Caco-2 (cell line): ENCODE measurements at regions of chr12 and their contacts with region 1.

Region 1: DNA sequence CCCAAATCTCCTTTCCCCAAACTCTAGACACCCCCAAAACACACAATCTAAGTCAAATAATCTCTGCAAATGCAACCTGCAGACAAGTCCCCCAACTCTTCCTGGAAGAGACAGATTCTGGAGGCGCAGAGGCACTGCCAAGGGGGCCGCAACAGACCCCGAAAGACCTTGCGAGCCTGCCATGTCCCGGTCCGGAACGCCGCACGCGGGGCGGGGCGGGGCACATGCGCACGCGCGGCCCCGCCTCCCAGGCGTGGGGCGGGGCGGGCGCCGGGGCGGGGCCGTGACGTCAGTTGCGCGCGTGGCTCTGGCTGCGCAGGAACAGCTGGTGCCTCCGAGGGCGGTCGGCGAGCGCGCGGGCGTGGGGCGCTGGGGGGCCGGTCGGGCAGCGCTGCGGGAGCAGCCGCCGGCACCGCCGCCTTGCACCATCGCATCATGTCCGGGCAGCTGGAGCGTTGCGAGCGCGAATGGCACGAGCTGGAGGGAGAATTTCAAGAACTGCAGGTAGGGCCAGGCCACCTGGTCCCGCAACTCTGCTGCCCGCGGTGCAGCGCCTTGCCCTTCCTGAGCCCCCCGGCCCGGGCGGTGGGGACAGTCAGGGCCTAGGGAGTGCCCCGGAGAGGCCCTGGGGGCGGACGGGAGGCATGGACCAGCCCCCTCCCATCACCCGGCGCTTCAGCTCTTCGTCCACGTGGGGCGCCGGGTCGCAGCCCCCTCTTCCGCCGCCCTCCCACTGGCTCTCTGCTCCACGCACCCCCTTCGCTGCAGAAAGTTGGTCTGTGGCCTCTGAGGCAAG is at the start of gene TMEM120B:
- DNase-seq: peak; percentile 78 to 89
- H3K4me3 ChIP-seq: peak within 1 kb of the TSS; percentile 98
- H3K4me3 Mint-ChIP-seq: peak within 1 kb of the TSS; percentile 81
- H3K27ac Mint-ChIP-seq: peak within 1 kb of the TSS; percentile 94
- H3K4me1 ChIP-seq: peaks cover 35% of the 10 kb centered on the region
- H3K4me1 Mint-ChIP-seq: peaks cover 17% of the 10 kb centered on the region
- H3K27me3 ChIP-seq: no peaks in the 10 kb centered on the region
- H3K27me3 Mint-ChIP-seq: no peaks in the 10 kb centered on the region
- CTCF ChIP-seq: peak; percentile 13 to 31
- total RNA-seq, gene TMEM120B: 15.5 and 15.9 TPM in 2 replicates

Region 2: GRCh38 chr12:121688966-121689365 is 23.7 kb before region 1 on chr12:
- CTCF ChIA-PET with region 1: interaction called, 7 read pairs
- POLR2A ChIA-PET with region 1: interaction called, 5 read pairs
- intact Hi-C with region 1: loop called (anchors 1 kb)
- DNase-seq: no peak
- H3K4me3 ChIP-seq: no peak overlapping the region
- H3K4me3 Mint-ChIP-seq: no peak overlapping the region
- H3K27ac Mint-ChIP-seq: no peak overlapping the region
- H3K4me1 ChIP-seq: no peaks in the 10 kb centered on the region
- H3K4me1 Mint-ChIP-seq: no peaks in the 10 kb centered on the region
- H3K27me3 ChIP-seq: no peaks in the 10 kb centered on the region
- H3K27me3 Mint-ChIP-seq: no peaks in the 10 kb centered on the region
- CTCF ChIP-seq: no peak

Region 3: GRCh38 chr12:121748571-121749253 is 36.1 kb after region 1 on chr12:
- CTCF ChIA-PET with region 1: interaction called, 4 read pairs
- POLR2A ChIA-PET with region 1: interaction called, 5 read pairs
- intact Hi-C with region 1: loop called (anchors 2 kb)
- DNase-seq: peak; percentile 83 to 92
- H3K4me3 ChIP-seq: no peak overlapping the region
- H3K4me3 Mint-ChIP-seq: peak overlapping the region; percentile 65
- H3K27ac Mint-ChIP-seq: peak overlapping the region; percentile 95
- H3K4me1 ChIP-seq: peaks cover 15% of the 10 kb centered on the region
- H3K4me1 Mint-ChIP-seq: peaks cover 10% of the 10 kb centered on the region
- H3K27me3 ChIP-seq: no peaks in the 10 kb centered on the region
- H3K27me3 Mint-ChIP-seq: no peaks in the 10 kb centered on the region
- CTCF ChIP-seq: no peak

Region 4: DNA sequence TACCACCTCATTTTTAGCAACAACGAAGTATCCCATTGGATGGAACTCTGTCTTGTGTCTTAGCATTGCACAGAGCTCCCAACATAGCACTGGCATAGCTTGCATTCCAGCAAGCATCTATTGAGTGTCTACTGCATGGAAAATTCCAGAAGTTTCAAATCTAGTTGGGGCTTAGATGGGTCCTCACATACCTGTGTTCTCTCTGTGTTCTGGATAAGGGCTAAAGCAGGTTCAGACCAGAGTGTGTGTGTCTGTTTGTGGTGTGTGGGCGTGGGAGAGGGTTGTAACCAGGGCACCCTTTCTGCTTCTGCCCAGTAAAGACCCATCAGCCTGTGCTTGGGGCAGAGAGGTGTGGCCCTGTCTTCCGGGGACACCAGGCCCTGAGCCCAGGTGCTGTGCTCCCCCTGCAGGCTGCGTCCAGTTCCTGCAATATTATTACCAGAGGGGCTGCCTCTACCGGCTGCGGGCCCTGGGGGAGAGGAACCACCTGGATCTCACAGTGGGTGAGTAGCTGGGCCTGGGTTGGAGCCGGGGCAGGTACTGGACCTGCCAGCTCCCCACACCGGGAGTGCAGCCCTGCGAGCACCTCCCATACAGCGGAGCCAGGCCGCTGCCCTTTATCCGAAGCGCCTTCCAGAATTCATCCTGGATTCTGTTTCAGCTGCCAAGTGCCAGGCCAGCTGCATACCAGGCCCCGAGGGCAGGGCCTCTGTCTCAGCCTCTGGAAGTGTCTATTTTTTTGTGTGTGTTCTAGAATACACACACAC is 60.5 kb after region 1 on chr12:
- CTCF ChIA-PET with region 1: interaction called, 11 read pairs
- POLR2A ChIA-PET with region 1: interaction called, 3 read pairs
- intact Hi-C with region 1: no loop called
- DNase-seq: peak; percentile 81 to 86
- H3K4me3 ChIP-seq: no peak overlapping the region
- H3K4me3 Mint-ChIP-seq: no peak overlapping the region
- H3K27ac Mint-ChIP-seq: peak overlapping the region; percentile 25
- H3K4me1 ChIP-seq: peaks cover 20% of the 10 kb centered on the region
- H3K4me1 Mint-ChIP-seq: peaks cover 11% of the 10 kb centered on the region
- H3K27me3 ChIP-seq: no peaks in the 10 kb centered on the region
- H3K27me3 Mint-ChIP-seq: no peaks in the 10 kb centered on the region
- CTCF ChIP-seq: peak; percentile 89 to 90

Region 5: GRCh38 chr12:121888478-121889266 is 176.0 kb after region 1 on chr12 and contains the start of gene PSMD9:
- CTCF ChIA-PET with region 1: no interaction called
- POLR2A ChIA-PET with region 1: no interaction called
- intact Hi-C with region 1: loop called (anchors 5 kb)
- DNase-seq: peak; percentile 98 to 99
- H3K4me3 ChIP-seq: peak within 1 kb of the TSS; percentile 84
- H3K4me3 Mint-ChIP-seq: peak within 1 kb of the TSS; percentile 84
- H3K27ac Mint-ChIP-seq: peak within 1 kb of the TSS; percentile 86
- H3K4me1 ChIP-seq: peaks cover 10% of the 10 kb centered on the region
- H3K4me1 Mint-ChIP-seq: peaks cover 15% of the 10 kb centered on the region
- H3K27me3 ChIP-seq: no peaks in the 10 kb centered on the region
- H3K27me3 Mint-ChIP-seq: no peaks in the 10 kb centered on the region
- CTCF ChIP-seq: peak; percentile 50 to 78
- total RNA-seq, gene PSMD9: 53.0 and 63.3 TPM in 2 replicates

Region 6: DNA sequence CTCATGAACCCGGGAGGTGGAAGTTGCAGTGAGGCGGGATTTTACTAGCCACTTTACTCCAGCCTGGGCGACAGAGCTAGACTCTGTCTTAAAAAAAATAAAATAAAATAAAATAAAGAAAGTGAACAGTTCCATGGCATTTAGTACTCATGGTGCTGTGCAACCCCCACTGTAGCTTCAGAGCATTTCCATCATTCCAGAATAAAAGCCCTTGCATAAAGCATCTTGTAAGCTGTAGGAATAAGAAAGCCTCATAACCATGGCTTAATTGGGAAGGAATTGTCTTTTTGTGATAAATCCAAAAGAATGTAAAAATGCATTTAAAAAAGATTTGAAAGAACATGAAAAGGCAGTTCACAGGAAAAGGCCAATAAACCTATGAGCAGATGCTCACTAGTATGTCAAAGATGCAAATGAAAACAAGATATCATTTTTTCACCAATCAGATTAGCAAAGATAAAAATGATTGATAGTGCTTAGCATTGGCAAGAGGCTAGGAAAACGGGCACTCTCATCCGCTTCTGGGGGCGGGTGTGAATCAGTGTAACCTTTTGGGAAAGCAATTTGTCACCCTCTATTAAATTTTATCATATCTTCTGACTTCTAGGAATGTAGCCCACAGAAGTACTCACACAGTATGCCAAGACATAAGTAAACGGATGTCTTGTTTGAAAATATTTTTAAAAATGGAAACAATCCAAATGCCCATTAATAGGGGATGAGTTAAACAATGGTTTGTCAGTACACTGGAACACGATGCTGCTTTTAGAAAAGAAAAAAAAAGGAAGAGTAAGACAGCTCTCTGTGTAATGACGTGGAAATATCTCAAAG is 252.4 kb after region 1 on chr12:
- CTCF ChIA-PET with region 1: no interaction called
- POLR2A ChIA-PET with region 1: no interaction called
- intact Hi-C with region 1: no loop called
- DNase-seq: no peak
- H3K4me3 ChIP-seq: no peak overlapping the region
- H3K4me3 Mint-ChIP-seq: no peak overlapping the region
- H3K27ac Mint-ChIP-seq: no peak overlapping the region
- H3K4me1 ChIP-seq: no peaks in the 10 kb centered on the region
- H3K4me1 Mint-ChIP-seq: peaks cover 6% of the 10 kb centered on the region
- H3K27me3 ChIP-seq: no peaks in the 10 kb centered on the region
- H3K27me3 Mint-ChIP-seq: no peaks in the 10 kb centered on the region
- CTCF ChIP-seq: no peak